ENCODE measurements at regions of chr7 and their contacts with region 1.

Region 1: DNA sequence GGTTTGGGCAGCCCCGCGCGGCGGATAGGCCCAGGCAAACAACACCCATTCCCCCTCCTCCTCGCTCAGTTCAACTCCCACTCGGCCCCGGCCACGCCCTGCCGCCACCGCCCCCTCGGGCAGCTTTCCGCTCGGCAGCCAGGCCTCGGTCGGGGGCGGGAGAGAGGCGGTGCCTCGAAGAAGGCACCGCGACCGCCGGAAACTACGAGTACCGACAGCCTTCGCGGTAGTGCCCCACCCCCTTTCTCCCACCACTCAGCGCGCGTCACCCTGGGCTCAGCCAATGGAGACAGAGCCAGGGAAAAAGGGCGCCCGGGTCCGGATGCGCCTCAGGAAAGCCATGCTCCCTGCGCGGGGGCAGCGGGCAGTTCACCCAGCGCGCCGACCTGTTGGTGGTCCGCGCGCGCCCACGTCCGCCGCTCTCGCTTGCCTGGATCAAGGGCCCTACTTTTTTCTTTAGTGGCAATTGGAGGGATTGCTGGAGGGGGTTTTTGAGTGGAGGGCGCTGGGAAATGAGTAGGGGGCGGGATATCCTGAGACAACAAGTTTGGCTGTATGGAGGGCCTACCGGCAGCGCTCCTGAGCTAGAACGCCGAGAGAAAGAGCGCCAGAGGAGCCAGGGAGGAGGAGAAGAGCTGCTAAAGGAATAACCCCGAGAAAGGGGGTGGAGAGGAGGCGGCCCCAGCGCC is 557 bp upstream of the SP4 start:
- DNase-seq: peak; percentile 99
- H3K4me3 Mint-ChIP-seq: peak overlapping the region; percentile 98
- H3K27ac Mint-ChIP-seq: peak overlapping the region; percentile 99
- H3K4me1 Mint-ChIP-seq: peaks cover 34% of the 10 kb centered on the region
- H3K27me3 Mint-ChIP-seq: no peaks in the 10 kb centered on the region

Region 2: DNA sequence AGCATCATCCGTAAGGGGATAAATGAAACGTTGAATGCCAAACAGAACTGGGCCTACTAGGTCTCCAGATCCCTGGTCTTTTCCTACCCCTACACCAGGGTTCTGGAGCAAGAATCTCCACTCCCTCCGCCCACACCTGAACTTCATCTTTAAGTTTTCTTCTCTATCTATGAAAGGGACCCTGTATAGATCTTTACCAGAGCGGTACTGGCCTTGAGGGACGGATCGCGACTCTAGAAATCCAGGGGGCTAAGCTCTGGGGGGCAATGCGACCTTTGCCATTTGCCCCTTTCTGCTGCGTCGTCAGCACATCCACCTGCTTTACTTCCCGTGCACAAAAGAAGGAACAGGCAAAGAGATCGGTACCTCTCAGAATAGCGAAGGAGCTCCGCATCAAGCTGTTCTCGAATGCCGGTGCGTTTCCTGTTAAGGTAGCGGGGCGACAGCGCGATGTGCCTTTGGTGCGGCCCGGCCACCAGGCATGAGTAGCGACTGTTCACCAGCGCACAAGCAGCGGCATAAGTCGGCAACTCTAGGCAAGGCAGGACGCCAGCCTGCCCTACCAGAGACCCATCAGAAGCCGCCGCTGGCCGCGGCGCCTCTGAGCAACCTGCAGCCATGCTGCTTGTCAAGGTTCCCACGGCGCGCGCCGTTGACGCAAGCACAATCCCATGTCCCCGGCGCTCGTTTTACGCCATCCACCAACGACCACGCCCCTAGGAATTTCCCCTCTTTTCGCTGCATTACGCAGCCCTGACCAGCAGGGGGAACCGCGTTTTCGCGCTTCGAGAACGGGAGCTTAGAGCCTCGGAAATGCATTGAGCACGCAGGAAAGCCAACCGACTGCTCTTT is 1718.7 kb before region 1 on chr7 and contains the start of gene POLR1F:
- CTCF ChIA-PET with region 1: no interaction called
- intact Hi-C with region 1: loop called (anchors 1 kb)
- DNase-seq: peak; percentile 95
- H3K4me3 Mint-ChIP-seq: peak within 1 kb of the TSS; percentile 87
- H3K27ac Mint-ChIP-seq: peak within 1 kb of the TSS; percentile 68
- H3K4me1 Mint-ChIP-seq: peaks cover 46% of the 10 kb centered on the region
- H3K27me3 Mint-ChIP-seq: no peaks in the 10 kb centered on the region
- total RNA-seq, gene POLR1F: 18.8 to 20.3 TPM

Region 3: DNA sequence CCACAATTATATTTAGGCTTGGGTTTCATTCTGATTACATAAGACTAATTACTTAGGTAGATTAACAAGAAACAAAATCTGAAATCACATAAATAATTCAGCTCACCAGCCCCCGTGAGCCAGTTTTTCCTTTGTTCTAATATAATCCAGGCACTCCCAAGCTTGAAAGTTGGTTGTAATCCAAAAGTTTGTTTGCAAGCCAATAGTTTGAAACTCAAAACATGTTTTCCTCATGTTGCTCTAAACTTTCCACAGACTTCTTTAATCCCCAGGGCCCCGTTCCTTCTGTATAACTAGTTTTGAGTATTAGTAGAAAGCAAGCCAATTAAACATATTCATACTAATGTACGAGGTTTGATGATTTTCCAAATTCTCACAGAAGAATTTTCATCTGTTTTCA is 696.7 kb before region 1 on chr7:
- CTCF ChIA-PET with region 1: no interaction called
- intact Hi-C with region 1: no loop called
- DNase-seq: no peak
- H3K4me3 Mint-ChIP-seq: no peak overlapping the region
- H3K27ac Mint-ChIP-seq: no peak overlapping the region
- H3K4me1 Mint-ChIP-seq: no peaks in the 10 kb centered on the region
- H3K27me3 Mint-ChIP-seq: peaks cover 9% of the 10 kb centered on the region

Region 4: GRCh38 chr7:21261627-21262594 is 165.4 kb before region 1 on chr7:
- CTCF ChIA-PET with region 1: interaction called, 5 read pairs
- intact Hi-C with region 1: loop called (anchors 1 kb)
- DNase-seq: peak; percentile 62
- H3K4me3 Mint-ChIP-seq: no peak overlapping the region
- H3K27ac Mint-ChIP-seq: no peak overlapping the region
- H3K4me1 Mint-ChIP-seq: peaks cover 7% of the 10 kb centered on the region
- H3K27me3 Mint-ChIP-seq: peaks cover 9% of the 10 kb centered on the region

Region 5: GRCh38 chr7:21352540-21353387 is 74.6 kb before region 1 on chr7:
- CTCF ChIA-PET with region 1: no interaction called
- intact Hi-C with region 1: loop called (anchors 1 kb)
- DNase-seq: no peak
- H3K4me3 Mint-ChIP-seq: no peak overlapping the region
- H3K27ac Mint-ChIP-seq: peak overlapping the region; percentile 24
- H3K4me1 Mint-ChIP-seq: peaks cover 46% of the 10 kb centered on the region
- H3K27me3 Mint-ChIP-seq: no peaks in the 10 kb centered on the region

Region 6: GRCh38 chr7:22001345-22002004 is 574.1 kb after region 1 on chr7:
- CTCF ChIA-PET with region 1: no interaction called
- intact Hi-C with region 1: loop called (anchors 5 kb)
- DNase-seq: peak; percentile 24
- H3K4me3 Mint-ChIP-seq: no peak overlapping the region
- H3K27ac Mint-ChIP-seq: no peak overlapping the region
- H3K4me1 Mint-ChIP-seq: peaks cover 3% of the 10 kb centered on the region
- H3K27me3 Mint-ChIP-seq: no peaks in the 10 kb centered on the region

Region 7: GRCh38 chr7:22885797-22886261 is 1458.5 kb after region 1 on chr7:
- CTCF ChIA-PET with region 1: no interaction called
- intact Hi-C with region 1: loop called (anchors 10 kb)
- DNase-seq: peak; percentile 88
- H3K4me3 Mint-ChIP-seq: peak overlapping the region; percentile 64
- H3K27ac Mint-ChIP-seq: peak overlapping the region; percentile 98
- H3K4me1 Mint-ChIP-seq: peaks cover 54% of the 10 kb centered on the region
- H3K27me3 Mint-ChIP-seq: no peaks in the 10 kb centered on the region

Region 8: DNA sequence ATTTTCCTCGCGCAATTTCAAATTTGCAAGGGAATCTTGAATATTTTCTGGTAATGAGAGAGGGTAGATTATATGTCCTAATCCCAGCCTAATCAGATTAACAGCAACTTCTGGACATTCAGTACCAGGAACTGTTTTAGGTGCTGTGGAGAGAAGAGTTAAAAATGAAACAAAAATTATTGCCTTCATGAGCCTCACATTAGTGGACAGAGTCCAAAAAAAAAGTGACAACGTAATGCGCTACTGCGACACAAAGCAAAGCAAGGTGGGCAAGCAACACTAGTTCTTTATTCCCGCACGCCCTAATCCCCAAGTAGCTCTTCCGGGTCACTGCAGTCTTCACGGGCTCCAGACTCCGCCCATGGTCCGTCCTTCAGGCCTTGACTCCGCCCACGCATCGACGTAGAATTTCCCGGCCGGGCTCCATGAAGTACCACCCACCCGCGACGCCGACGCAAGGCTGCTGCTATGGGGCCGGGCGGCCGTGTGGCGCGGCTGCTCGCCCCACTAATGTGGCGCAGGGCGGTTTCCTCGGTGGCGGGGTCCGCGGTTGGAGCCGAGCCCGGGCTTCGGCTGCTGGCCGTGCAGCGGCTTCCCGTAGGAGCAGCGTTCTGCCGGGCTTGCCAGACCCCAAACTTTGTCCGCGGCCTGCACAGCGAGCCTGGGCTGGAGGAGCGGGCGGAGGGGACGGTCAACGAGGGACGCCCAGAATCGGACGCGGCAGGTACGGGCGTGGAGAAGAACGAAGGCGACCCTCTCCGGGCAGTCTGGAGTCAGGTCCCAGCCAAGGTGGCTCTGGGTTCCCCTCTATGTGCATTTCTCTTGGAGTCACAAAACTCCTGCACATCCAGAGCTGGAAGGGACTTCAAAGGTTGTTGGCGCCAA is 1871.8 kb after region 1 on chr7 and contains the start of gene MALSU1:
- CTCF ChIA-PET with region 1: no interaction called
- intact Hi-C with region 1: loop called (anchors 5 kb)
- DNase-seq: peak; percentile 99
- H3K4me3 Mint-ChIP-seq: peak within 1 kb of the TSS; percentile 96
- H3K27ac Mint-ChIP-seq: peak within 1 kb of the TSS; percentile 95
- H3K4me1 Mint-ChIP-seq: peaks cover 30% of the 10 kb centered on the region
- H3K27me3 Mint-ChIP-seq: no peaks in the 10 kb centered on the region
- total RNA-seq, gene MALSU1: 98.4 to 101 TPM

Measured in activated naive CD4-positive, alpha-beta T cell treated with anti-CD3 and anti-CD28 coated beads for 36 hours (primary cell).